ENCODE measurements at regions of chr14 and their contacts with region 1.

Region 1: DNA sequence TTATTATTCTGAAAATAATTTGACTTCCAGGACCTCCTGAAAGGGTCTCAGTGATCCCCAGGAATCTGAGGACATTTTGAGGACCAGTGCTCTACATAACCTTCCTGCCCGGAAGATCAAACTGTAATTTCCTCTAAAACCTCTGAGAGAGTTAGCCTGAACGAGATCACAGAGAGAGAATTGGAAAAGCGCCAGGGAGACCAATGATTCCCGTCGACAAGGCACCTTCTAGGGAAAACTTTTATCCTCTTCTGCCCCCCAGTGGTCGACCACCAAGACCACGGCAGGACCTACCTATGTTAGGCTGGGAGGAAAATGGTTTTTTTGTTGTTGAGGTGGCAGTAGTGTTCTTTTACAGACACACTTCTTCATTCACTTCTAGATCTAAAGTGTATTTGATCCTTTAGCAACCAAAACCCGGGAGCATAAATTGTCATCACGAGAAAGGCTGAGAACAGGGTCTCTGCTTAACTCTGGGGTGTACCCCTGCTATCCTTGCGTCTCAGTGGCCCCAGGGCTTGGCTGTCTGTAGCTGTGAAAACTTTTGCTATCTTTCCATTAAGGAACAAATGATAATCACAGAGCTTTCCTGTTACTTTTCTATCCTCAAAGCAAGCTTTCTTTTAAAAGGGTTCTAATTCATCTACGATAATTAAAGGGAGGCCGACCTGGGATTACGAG is 62.9 kb upstream of the NID2 start:
- DNase-seq: peak; percentile 88

Region 2: DNA sequence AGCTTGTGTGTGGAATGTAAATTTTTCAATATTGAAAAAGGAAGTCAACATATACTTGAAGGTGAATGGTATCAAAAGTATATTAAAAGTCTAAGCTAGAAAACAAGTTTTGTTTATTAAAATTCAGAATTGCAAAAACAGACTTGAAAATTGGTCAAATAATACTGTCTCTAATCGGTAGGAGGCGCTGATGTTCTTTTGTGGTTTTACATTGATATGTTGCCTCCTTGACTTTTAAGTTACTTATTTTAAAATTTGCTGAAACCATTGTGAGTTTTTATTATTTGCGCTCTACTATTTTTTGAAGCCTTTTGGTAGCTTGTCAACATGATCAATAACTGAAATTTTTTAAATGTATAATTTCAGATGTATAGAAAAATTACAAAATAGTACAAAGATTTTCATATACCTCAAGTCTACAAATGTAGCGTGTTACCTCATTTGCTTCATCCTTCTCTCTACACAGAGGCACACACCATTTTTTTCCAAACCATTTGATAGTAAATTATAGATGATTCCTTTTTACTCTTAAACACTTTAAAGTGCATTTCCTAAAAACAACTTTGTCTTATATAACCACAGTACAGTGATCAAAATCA is 135.5 kb before region 1 on chr14:
- intact Hi-C with region 1: loop called (anchors 1 kb)
- DNase-seq: no peak

Region 3: GRCh38 chr14:52015411-52016030 is 116.3 kb before region 1 on chr14:
- intact Hi-C with region 1: loop called (anchors 5 kb)
- DNase-seq: no peak

Region 4: DNA sequence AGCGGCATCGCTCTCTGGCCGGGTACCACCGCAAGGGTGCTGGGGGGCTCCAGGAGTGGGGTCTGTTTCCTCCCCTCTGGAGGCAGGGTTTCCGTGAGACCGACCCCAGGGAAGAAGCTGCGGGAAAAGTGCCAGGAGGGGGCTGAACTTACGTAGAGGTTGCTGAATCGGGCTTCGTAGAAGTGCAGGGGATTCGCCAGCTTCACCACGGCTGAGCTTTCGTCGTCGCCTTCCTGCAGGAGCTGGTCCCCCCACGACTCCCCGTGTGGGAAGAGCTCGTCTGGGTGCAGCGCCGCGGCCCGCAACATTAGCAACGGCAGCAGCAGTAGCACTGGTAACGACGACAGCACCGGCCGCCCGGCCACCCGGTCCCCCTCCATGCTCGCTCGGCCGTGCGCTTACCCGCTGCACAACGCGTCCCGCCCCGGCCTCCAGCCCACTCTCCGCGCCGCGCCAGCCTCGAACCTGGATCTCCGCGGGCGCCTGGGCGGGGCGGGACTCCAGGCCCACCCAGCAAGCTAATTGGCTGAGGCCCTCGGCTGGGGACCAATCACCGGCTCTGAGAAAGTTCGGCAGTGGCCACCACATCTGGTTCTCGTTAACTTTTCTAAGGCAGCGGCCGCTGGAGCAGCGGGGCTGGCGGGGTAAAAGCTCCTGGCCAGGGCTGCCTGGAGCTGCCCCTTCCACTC is 63.0 kb before region 1 on chr14 and contains the start of gene NID2:
- intact Hi-C with region 1: loop called (anchors 5 kb)
- DNase-seq: peak; percentile 93
- total RNA-seq, gene NID2: 37.3 TPM